Stomach (tissue), 19 donors: ENCODE measurements at regions of chr15 and their contacts with region 1.

Region 1: GRCh38 chr15:59492389-59493377 is 54.7 kb downstream of the FAM81A start:
- DNase-seq: peak; percentile 66 to 90
- H3K4me3 ChIP-seq: no peak overlapping the region
- H3K27ac ChIP-seq: no peak overlapping the region
- H3K4me1 ChIP-seq: peaks cover 0 to 7% (median 3%) of the 10 kb centered on the region in 4 donors
- H3K27me3 ChIP-seq: no peaks in the 10 kb centered on the region
- CTCF ChIP-seq: peak in 5 of 7 experiments; percentile 62 to 89 (median 74)
- EP300 ChIP-seq: no peak
- POLR2A ChIP-seq: no peak

Region 2: GRCh38 chr15:58582160-58582559 is 910.5 kb before region 1 on chr15:
- intact Hi-C with region 1: no loop called
- DNase-seq: no peak
- H3K4me3 ChIP-seq: no peak overlapping the region
- H3K27ac ChIP-seq: no peak overlapping the region
- H3K4me1 ChIP-seq: no peaks in the 10 kb centered on the region
- H3K27me3 ChIP-seq: no peaks in the 10 kb centered on the region
- CTCF ChIP-seq: no peak
- EP300 ChIP-seq: no peak
- POLR2A ChIP-seq: no peak

Region 3: DNA sequence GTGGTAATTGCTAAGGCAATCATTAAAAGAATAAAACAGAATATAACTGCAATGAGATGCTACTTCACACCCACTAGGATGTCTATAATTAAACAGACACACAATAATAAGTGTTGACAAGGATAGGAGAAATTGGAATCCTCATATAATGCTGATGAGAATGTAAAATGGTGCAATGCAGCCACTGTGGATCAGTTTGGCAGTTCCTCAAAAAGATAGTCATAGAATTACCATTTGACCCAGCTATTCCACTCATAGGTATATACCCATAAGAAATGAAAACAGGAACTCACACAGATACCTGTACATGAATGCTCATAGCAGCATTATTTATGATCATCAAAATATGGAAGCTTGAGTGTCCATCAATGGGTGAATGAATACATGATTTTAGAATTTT is 514.8 kb before region 1 on chr15:
- intact Hi-C with region 1: loop called (anchors 10 kb)
- DNase-seq: no peak
- H3K4me3 ChIP-seq: no peak overlapping the region
- H3K27ac ChIP-seq: no peak overlapping the region
- H3K4me1 ChIP-seq: peaks cover 0 to 41% (median 7%) of the 10 kb centered on the region in 4 donors
- H3K27me3 ChIP-seq: no peaks in the 10 kb centered on the region
- CTCF ChIP-seq: no peak
- EP300 ChIP-seq: no peak
- POLR2A ChIP-seq: no peak

Region 4: DNA sequence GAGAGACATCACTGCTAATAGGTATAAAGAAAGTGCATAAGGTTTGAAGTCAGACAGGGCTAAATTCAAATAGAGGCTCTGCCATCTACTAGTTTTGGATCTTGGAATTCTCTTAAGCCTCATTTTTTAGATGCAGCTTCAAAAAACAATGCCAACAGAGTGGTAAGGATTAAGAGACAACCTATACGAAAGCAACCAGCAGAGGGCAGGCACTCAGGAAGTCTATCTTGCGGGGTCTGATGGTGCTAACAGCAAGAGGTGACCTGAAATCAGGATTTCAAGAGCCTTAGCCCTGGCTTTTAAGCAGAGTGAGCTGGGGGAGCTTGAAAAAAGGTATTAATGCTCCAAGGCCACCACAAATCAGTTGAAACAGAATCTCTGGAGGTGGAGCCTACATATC is 245.3 kb before region 1 on chr15:
- intact Hi-C with region 1: loop called (anchors 10 kb)
- DNase-seq: peak; percentile 61 to 86
- H3K4me3 ChIP-seq: no peak overlapping the region
- H3K27ac ChIP-seq: no peak overlapping the region
- H3K4me1 ChIP-seq: peaks cover 0 to 5% (median 0%) of the 10 kb centered on the region in 4 donors
- H3K27me3 ChIP-seq: no peaks in the 10 kb centered on the region
- CTCF ChIP-seq: peak in 5 of 7 experiments; percentile 13 to 55 (median 45)
- EP300 ChIP-seq: no peak
- POLR2A ChIP-seq: no peak